ENCODE measurements at regions of chr7 and their contacts with region 1.

Region 1: DNA sequence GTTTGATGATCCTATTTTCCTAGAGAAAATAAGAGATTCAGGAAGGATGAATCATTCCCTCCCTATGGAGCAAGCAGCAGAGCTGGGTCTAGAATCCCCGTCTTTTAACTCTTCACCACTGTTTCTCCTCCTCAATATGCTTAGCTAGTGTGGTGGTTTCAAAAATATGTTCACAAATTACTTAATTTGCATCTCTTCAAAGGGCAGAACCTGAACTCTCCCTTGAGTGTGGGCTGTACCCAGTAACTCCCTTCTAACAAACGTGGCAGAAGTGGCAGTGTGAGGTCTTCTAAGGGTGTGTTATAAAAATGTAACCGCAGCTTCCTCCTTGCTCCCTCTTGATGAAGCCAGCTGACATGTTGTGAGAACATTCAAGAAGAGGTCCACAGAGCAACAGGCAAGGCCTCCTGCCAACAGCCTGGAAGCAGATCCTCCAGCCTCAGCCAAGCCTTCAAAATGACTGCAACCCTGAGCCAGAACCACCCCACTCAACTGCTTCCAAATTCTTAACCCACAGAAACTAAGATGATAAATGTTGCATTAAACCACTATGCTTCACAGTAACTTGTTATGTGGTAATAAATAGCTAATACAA is 36.6 kb downstream of the SRPK2 start:
- DNase-seq: peak; percentile 93
- ATAC-seq: peak; percentile 91
- H3K4me3 ChIP-seq: no peak overlapping the region
- H3K27ac ChIP-seq: peak overlapping the region; percentile 62
- H3K4me1 ChIP-seq: peaks cover 43% of the 10 kb centered on the region
- H3K27me3 ChIP-seq: no peaks in the 10 kb centered on the region
- CTCF ChIP-seq: no peak
- EP300 ChIP-seq: peak; percentile 22 to 61; a peak in 2 of 4 replicates
- POLR2A ChIP-seq: peak; percentile 40; the same call in 1 of the 2 replicates
- RAD21 ChIP-seq: no peak

Region 2: DNA sequence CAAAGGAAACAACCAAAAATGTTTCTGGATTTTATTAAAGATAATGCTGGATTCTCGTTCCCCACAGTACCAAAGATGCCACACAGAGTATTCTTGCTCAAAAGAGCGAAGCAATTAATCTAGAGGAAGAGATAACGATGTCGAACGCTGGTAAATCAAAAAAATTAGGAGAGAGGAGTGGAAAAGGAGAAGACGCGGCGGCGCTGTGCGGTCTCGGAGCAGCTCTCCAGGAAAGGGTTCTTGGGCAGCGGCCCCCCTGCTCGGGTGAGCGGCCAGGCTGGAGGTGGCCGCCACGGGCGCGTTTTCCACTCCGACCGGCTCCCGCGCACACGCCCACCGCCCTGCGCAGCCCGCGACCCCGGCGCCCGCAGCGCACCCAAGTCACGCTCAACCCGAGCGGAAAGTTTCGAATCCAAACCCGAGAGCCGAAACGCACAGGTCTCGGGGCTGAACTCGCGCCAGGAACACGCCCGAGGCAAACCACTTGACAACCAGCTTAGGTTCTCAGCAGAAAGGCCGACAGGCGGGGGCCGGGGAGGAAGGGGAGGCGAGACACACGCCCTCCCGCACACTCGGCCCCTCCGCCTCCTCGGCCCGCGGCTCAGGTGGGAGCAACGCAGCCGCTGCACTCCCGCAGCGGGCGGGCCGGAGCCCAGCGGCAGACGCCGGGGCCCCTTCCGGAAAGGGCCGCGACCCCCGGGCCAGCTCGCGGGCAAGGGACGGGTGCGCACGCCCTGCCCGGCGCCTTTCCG is 35.7 kb after region 1 on chr7:
- CTCF ChIA-PET with region 1: interaction called, 3 read pairs
- POLR2A ChIA-PET with region 1: interaction called, 5 read pairs
- RAD21 ChIA-PET with region 1: interaction called, 12 read pairs
- SMC1A ChIA-PET with region 1: interaction called, 5 read pairs
- in situ Hi-C with region 1: no loop called
- intact Hi-C with region 1: loop called (anchors 5 kb)
- DNase-seq: no peak
- ATAC-seq: peak; percentile 76
- H3K4me3 ChIP-seq: peak overlapping the region; percentile 94
- H3K27ac ChIP-seq: peak overlapping the region; percentile 25; the same call in 1 of the 2 replicates
- H3K4me1 ChIP-seq: 0 out of 2 replicates have a peak, but pooled peaks cover 3% of the 10 kb centered on the region
- H3K27me3 ChIP-seq: no peaks in the 10 kb centered on the region
- CTCF ChIP-seq: no peak
- EP300 ChIP-seq: no peak
- POLR2A ChIP-seq: peak; percentile 16; the same call in 1 of the 2 replicates
- RAD21 ChIP-seq: no peak